Sigmoid colon (tissue), 7 donors: ENCODE measurements at regions of chr10 and their contacts with region 1.

Region 1: DNA sequence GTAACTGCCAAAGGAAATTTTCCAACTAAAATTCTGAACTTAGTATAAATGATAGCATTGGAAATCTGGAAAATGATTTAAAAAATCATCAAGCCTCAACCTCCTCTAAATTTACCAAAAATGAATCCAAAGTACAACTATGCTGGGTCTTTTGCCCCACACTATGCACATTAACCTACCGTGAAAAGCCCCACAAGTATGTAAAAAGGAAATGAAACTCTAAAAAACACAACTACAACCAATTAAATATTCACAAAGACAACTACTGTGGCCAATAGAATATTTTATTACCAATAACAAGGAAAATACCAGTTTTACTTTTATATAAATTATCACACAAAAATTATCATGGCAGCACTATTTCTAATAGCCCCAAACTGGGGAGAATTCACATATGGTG is 19.3 kb downstream of the EIF3A start:
- DNase-seq: no peak
- H3K4me3 ChIP-seq: no peak overlapping the region
- H3K27ac ChIP-seq: no peak overlapping the region
- H3K4me1 ChIP-seq: no peaks in the 10 kb centered on the region
- H3K27me3 ChIP-seq: no peaks in the 10 kb centered on the region
- CTCF ChIP-seq: no peak
- EP300 ChIP-seq: no peak
- POLR2A ChIP-seq: no peak

Region 2: DNA sequence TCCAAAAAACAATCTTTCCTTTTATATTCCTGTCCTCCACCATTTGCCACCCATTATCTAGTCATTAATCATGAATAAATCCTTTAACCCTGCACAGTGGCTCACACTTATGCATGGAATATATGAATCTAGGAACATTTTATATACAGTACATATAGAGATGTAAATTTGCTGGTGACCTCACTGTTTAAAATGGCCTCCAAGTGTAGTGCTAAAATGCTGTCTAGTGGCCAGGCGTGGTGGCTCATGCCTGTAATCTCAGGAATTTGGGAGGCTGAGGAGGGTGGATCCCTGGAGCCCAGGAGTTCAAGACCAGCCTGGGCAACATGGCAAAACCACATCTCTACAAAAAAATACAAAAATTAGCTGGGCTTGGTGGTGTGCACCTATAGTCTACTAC is 22.2 kb before region 1 on chr10:
- intact Hi-C with region 1: loop called (anchors 2 kb)
- DNase-seq: no peak
- H3K4me3 ChIP-seq: no peak overlapping the region
- H3K27ac ChIP-seq: no peak overlapping the region
- H3K4me1 ChIP-seq: no peaks in the 10 kb centered on the region
- H3K27me3 ChIP-seq: no peaks in the 10 kb centered on the region
- CTCF ChIP-seq: no peak
- EP300 ChIP-seq: no peak
- POLR2A ChIP-seq: no peak

Region 3: GRCh38 chr10:119517235-119518141 is 456.1 kb after region 1 on chr10:
- intact Hi-C with region 1: no loop called
- DNase-seq: no peak
- H3K4me3 ChIP-seq: no peak overlapping the region
- H3K27ac ChIP-seq: peak overlapping the region; percentile 8 to 33 (median 22)
- H3K4me1 ChIP-seq: peaks cover 0 to 30% (median 4%) of the 10 kb centered on the region in 4 donors
- H3K27me3 ChIP-seq: no peaks in the 10 kb centered on the region
- CTCF ChIP-seq: no peak
- EP300 ChIP-seq: no peak
- POLR2A ChIP-seq: no peak